B cell (primary cell): ENCODE measurements at regions of chr12 and their contacts with region 1.

Region 1: DNA sequence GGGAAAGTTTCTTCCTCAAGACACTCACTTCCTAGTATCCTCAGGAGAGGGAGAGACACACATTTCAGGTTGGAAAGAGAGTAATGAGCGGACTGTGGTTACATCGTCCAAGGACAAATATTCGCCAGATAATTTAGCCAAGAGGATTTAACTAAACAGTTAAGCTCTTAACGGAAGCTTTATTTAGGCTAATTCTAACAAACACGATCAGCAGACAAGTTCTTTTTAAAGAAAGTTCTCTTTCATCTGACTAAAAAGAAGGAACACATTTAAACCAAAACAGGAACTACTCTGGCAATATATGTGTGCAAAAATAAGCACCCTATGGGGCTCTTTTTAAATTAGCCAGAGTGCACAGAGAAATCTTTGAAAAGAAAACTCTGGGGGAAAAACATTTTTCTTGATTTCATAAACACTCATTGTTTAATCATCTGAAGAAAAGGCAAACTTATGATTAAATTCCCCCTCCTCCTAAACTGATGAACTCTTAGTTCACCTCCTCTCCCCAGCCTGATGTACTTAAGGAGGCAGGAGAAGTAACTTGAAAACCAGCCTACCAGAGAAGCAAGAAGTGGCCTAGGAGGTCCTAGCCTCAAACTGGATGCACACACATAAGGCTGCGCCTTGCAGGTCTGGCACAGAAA is 13.3 kb upstream of the BTG1 start:
- DNase-seq: peak; percentile 67
- ATAC-seq: peak; percentile 69
- H3K4me3 ChIP-seq: peak overlapping the region; percentile 9 to 55 (median 41)
- H3K4me3 Mint-ChIP-seq: peak overlapping the region; percentile 81
- H3K27ac ChIP-seq: peak overlapping the region; percentile 87 to 89
- H3K27ac Mint-ChIP-seq: peak overlapping the region; percentile 88
- H3K4me1 ChIP-seq: peaks cover 79 to 82% of the 10 kb centered on the region in 2 donors
- H3K4me1 Mint-ChIP-seq: peaks cover 87% of the 10 kb centered on the region
- H3K27me3 ChIP-seq: no peaks in the 10 kb centered on the region
- H3K27me3 Mint-ChIP-seq: no peaks in the 10 kb centered on the region
- CTCF ChIP-seq: no peak

Region 2: DNA sequence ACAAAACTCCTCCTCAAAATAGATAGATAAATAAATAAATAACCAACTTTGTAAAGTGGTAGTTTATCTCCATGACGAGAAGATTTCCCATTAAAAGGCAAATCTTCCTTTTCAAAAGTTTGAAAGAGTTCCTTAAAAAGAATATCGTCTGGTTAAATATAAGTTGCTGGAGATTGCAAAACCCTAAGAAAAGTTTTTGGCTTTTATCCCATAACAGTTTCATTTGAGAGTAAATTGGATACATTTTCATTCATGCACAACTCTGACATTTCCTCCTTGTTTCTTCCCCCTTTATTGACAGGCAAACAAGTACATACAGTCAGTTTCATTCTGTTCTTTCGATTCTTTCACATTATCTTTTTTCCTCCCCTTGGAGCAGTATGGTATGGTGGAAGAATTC is 32.1 kb after region 1 on chr12:
- CTCF ChIA-PET with region 1: no interaction called
- POLR2A ChIA-PET with region 1: interaction called, 5 read pairs
- intact Hi-C with region 1: loop called (anchors 5 kb)
- DNase-seq: no peak
- ATAC-seq: no peak
- H3K4me3 ChIP-seq: peak overlapping the region in 2 of 5 experiments; percentile 2 to 15
- H3K4me3 Mint-ChIP-seq: peak overlapping the region; percentile 17
- H3K27ac ChIP-seq: no peak overlapping the region
- H3K27ac Mint-ChIP-seq: peak overlapping the region; percentile 10
- H3K4me1 ChIP-seq: peaks cover 33 to 49% of the 10 kb centered on the region in 2 donors
- H3K4me1 Mint-ChIP-seq: peaks cover 51% of the 10 kb centered on the region
- H3K27me3 ChIP-seq: no peaks in the 10 kb centered on the region
- H3K27me3 Mint-ChIP-seq: no peaks in the 10 kb centered on the region
- CTCF ChIP-seq: no peak